ENCODE measurements at regions of chr2 and their contacts with region 1.

Region 1: GRCh38 chr2:240143801-240144648 is 3.6 kb upstream of the OTOS start:
- DNase-seq: peak; percentile 20
- ATAC-seq: peak; percentile 91
- H3K4me3 ChIP-seq: no peak overlapping the region
- H3K27ac ChIP-seq: no peak overlapping the region
- H3K4me1 ChIP-seq: no peaks in the 10 kb centered on the region
- H3K27me3 ChIP-seq: no peaks in the 10 kb centered on the region
- CTCF ChIP-seq: peak; percentile 94

Region 2: GRCh38 chr2:240060977-240061591 is 82.9 kb before region 1 on chr2:
- CTCF ChIA-PET with region 1: interaction called, 15 read pairs
- POLR2A ChIA-PET with region 1: no interaction called
- in situ Hi-C with region 1: no loop called
- intact Hi-C with region 1: loop called (anchors 1 kb)
- DNase-seq: peak; percentile 22
- ATAC-seq: peak; percentile 92
- H3K4me3 ChIP-seq: no peak overlapping the region
- H3K27ac ChIP-seq: no peak overlapping the region
- H3K4me1 ChIP-seq: no peaks in the 10 kb centered on the region
- H3K27me3 ChIP-seq: peaks cover 23% of the 10 kb centered on the region
- CTCF ChIP-seq: peak; percentile 84

Region 3: DNA sequence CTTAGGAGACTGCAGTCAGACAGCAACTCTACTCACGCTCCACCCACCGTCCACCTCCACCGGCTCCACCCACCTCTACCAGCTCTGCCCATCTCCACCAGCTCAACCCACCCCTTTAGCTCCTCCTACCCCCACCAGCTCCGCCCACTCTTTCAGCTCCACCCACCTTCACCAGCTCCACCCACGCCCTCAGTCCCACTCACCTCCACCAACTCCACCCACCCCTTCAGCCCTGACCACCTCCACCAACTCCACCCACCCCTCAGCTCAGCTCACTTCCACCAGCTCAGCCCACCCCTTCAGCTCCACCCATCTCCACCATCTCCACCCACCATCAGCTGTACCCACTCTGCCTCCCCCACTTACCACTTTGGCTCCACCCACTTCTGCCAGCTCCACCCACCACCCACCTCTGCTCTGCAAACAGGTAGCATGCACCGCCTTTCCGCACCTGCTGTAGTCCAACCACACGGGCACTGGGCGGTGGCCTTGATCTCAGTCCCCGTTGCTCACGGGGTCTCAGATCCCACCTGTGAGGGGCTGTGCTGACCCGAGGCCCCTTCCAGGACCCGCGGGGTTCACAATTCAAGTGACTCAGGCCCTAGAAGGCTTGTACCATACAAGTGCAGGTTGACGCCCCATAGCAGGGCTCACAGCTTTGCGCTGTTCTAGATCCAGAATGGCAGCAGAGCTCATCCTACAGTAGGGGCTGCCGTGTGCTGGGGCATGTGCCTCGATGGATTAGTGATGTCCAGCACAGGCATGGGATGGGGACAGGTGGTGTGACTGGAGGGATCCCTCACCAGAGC is 73.6 kb after region 1 on chr2:
- CTCF ChIA-PET with region 1: interaction called, 19 read pairs
- POLR2A ChIA-PET with region 1: no interaction called
- in situ Hi-C with region 1: no loop called
- intact Hi-C with region 1: no loop called
- DNase-seq: no peak
- ATAC-seq: peak; percentile 56; the same call in 1 of the 2 replicates
- H3K4me3 ChIP-seq: no peak overlapping the region
- H3K27ac ChIP-seq: no peak overlapping the region
- H3K4me1 ChIP-seq: no peaks in the 10 kb centered on the region
- H3K27me3 ChIP-seq: peaks cover 8% of the 10 kb centered on the region; the same call in 1 of the 2 replicates
- CTCF ChIP-seq: no peak

Measured in Panc1 (cell line).